Sciatic nerve (tissue), 2 donors: ENCODE measurements at regions of chr2 and their contacts with region 1.

Region 1: DNA sequence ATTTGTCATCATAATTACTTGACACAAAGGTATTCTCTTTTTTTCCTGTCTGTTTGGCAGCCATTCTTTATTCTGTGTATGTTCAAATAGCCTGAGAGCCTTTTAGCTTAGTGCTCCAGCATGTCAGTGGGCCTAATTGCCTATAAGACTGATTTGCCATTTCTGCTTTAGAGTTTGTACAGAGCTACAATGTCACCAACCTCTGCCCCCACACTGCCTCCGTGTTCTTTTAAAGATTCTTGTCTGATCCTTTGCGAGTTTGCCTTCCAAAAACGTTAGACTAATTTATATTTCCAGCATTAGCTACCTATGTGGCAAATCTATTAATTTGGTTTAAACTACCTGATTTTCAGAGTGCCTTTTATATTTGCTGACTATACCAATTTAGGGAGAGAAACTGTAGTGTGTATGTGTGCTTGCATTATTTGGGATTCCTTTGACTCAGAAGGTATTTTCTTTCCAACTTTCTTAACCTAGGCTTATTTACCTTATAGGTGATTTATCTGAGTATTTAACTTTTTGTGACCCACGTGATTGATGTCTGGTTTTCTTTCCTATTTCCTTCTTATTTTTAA is 70.8 kb downstream of the FAM117B start:
- DNase-seq: no peak
- ATAC-seq: no peak

Region 2: DNA sequence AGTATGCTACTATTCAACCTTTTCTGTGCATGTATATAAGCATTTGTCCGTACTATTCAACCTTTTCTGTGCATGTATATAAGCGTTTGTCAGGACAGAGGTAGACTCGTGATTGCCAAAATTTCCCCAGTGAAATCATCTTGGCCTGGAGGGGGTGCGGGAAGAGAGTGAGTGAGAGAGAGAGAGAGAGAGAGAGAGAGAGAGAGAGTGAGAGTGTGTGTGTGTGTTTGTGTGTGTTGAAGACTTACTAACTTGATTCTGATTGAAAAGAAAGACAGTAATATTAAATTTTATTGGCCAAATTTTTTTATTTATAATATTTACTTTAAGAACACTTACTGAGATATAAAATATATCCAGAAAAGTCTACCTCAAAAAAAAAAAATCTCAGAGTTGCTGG is 51.6 kb before region 1 on chr2:
- intact Hi-C with region 1: loop called (anchors 2 kb)
- DNase-seq: no peak
- ATAC-seq: no peak